Mammary epithelial cell (primary cell): ENCODE measurements at regions of chr12 and their contacts with region 1.

Region 1: DNA sequence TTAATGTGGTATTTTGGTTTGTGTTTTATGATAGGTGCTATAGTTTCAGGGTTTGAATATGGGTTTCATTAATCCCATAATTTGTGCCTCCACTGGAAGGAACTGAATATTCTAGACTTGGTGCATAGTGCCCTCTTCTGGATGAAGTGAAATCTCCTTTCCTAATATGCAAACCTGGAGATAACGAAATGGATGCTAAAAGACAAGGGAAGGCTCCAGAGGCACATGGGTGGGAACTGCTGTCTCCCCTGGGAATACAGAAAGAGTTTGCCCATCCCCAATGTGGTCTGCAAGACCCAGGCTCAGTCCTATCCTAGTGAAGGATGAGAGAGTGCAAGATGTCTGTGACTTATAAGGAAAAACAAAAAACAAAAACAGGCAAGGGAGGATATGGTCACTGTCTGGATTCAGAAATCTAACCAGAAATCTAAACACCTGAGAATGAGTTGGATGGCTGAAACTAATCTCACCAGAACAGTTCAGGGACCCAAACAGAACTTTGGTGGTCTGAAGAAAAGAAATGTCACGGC is 142.3 kb upstream of the TMPO start:
- DNase-seq: peak; percentile 38
- H3K4me3 ChIP-seq: no peak overlapping the region
- H3K27ac ChIP-seq: no peak overlapping the region
- H3K4me1 ChIP-seq: peaks cover 7% of the 10 kb centered on the region
- H3K27me3 ChIP-seq: no peaks in the 10 kb centered on the region
- CTCF ChIP-seq: peak; percentile 72

Region 2: GRCh38 chr12:97148941-97149559 is 1224.0 kb before region 1 on chr12:
- CTCF ChIA-PET with region 1: no interaction called
- dilution Hi-C with region 1: no loop called
- in situ Hi-C with region 1: loop called in 1 of 2 experiments (anchors 25 kb)
- intact Hi-C with region 1: loop called (anchors 1 kb)
- DNase-seq: peak; percentile 26
- H3K4me3 ChIP-seq: no peak overlapping the region
- H3K27ac ChIP-seq: no peak overlapping the region
- H3K4me1 ChIP-seq: no peaks in the 10 kb centered on the region
- H3K27me3 ChIP-seq: no peaks in the 10 kb centered on the region
- CTCF ChIP-seq: peak; percentile 86 to 92

Region 3: DNA sequence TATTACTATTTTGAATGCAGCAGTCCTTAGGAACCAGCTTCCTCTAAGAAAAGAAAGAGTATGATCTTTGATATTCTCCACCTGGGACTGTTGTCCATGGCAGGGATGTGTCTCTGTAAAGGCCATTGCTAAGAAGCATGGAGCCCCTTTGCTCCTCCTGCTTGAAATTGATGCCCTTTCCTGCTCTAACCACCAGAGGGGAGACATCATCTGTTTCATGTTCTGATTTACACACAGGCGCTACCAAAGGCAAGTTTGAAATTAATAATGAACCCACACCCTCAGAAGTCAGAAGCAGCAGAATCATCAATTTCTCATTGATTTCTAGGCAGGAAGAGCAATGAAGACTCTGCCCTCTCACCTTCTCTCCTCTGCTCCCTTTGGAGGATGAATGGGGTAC is 656.7 kb before region 1 on chr12:
- CTCF ChIA-PET with region 1: no interaction called
- dilution Hi-C with region 1: no loop called
- in situ Hi-C with region 1: no loop called
- intact Hi-C with region 1: loop called (anchors 5 kb)
- DNase-seq: peak; percentile 19
- H3K4me3 ChIP-seq: no peak overlapping the region
- H3K27ac ChIP-seq: no peak overlapping the region
- H3K4me1 ChIP-seq: no peaks in the 10 kb centered on the region
- H3K27me3 ChIP-seq: no peaks in the 10 kb centered on the region
- CTCF ChIP-seq: peak; percentile 42 to 61

Region 4: DNA sequence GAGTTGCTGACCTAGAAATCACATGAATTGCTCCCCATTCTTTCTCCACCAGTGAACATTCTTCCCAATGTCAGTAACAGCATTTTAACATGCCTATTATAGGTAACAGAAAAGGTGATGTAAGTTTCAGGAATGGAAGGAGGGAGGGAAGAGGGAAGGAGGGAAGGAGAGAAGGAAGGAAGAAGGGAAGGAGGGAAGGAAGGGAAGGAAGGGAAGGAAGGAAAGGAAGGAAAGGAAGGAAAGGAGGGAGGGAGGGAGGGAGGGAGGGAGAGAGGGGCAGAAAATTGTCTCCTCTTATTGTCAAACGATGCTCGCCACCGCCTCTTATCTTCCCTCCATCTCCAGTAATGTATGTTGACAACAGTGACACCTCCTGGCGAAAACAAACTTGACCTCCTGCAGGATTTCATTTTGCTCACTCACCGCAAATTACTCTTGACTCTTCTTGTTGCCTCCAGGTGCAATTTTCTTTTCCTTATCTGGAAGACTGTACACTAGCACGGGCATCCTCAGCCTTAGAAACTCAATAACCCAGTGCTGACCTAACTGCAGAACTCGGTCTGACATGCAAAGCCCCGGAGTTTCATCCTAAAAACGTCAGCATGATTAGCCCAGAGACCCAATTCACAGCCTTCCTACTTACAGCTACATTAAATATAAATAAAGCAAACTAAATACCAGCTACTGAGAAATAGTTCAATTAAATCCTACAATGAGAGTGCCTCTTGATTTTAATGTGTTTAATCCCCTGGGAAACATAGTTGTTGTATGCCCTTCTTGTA is 370.2 kb before region 1 on chr12:
- CTCF ChIA-PET with region 1: no interaction called
- dilution Hi-C with region 1: no loop called
- in situ Hi-C with region 1: no loop called
- intact Hi-C with region 1: loop called (anchors 2 kb)
- DNase-seq: peak; percentile 48
- H3K4me3 ChIP-seq: no peak overlapping the region
- H3K27ac ChIP-seq: no peak overlapping the region
- H3K4me1 ChIP-seq: no peaks in the 10 kb centered on the region
- H3K27me3 ChIP-seq: no peaks in the 10 kb centered on the region
- CTCF ChIP-seq: peak; percentile 59 to 66

Region 5: DNA sequence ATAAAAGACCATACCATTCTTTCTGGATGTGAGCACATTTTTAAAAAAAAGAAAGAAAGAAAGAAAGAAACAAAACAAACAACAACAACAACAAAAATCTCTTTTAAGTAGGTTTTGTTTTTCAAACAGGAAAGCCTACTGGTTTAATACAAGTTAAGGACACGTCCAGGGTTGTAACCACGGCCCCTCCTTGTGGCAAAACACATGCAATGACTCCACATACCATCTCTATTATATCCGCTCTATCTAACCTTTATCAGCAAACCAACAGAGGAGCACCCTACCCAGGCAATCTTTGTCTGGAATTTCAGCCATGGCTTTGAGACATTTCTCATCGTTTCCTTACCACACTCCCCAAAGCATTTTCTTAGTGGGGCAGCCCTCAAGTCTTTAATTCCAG is 218.2 kb before region 1 on chr12:
- CTCF ChIA-PET with region 1: no interaction called
- dilution Hi-C with region 1: no loop called
- in situ Hi-C with region 1: no loop called
- intact Hi-C with region 1: loop called (anchors 5 kb)
- DNase-seq: peak; percentile 2
- H3K4me3 ChIP-seq: no peak overlapping the region
- H3K27ac ChIP-seq: no peak overlapping the region
- H3K4me1 ChIP-seq: no peaks in the 10 kb centered on the region
- H3K27me3 ChIP-seq: peaks cover 5% of the 10 kb centered on the region
- CTCF ChIP-seq: peak in 1 of 2 donors; percentile 62

Region 6: GRCh38 chr12:98227162-98227561 is 145.9 kb before region 1 on chr12:
- CTCF ChIA-PET with region 1: no interaction called
- dilution Hi-C with region 1: no loop called
- in situ Hi-C with region 1: no loop called
- intact Hi-C with region 1: loop called (anchors 1 kb)
- DNase-seq: no peak
- H3K4me3 ChIP-seq: no peak overlapping the region
- H3K27ac ChIP-seq: no peak overlapping the region
- H3K4me1 ChIP-seq: no peaks in the 10 kb centered on the region
- H3K27me3 ChIP-seq: peaks cover 2% of the 10 kb centered on the region
- CTCF ChIP-seq: peak; percentile 48 to 68

Region 7: GRCh38 chr12:98296462-98297079 is 76.5 kb before region 1 on chr12:
- CTCF ChIA-PET with region 1: no interaction called
- dilution Hi-C with region 1: no loop called
- in situ Hi-C with region 1: no loop called
- intact Hi-C with region 1: loop called (anchors 10 kb)
- DNase-seq: peak; percentile 7
- H3K4me3 ChIP-seq: no peak overlapping the region
- H3K27ac ChIP-seq: no peak overlapping the region
- H3K4me1 ChIP-seq: no peaks in the 10 kb centered on the region
- H3K27me3 ChIP-seq: no peaks in the 10 kb centered on the region
- CTCF ChIP-seq: no peak